Endothelial cell of umbilical vein (primary cell): ENCODE measurements at regions of chr11 and their contacts with region 1.

Region 1: DNA sequence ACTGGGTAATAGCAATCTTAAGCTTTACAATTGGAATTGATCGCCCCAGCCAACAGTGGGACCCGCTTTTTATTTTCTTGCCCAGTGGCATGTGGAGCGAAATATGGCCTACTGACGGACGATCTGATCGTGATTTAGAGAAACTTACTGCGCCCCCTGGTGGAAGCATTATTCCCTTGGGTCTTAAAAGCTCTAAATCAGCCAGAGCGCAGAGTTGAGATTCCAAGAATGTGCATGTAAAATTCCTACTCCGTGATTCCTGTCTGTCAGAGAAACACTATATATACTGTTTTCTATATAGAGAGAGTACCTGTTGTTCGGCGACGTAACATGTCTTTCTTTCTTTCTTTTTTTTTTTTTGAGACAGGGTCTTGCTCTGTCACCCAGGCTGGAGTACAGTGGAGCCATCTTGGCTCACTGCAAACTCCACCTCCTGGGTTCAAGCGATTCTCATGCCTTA is 3.7 kb upstream of the DPF2 start:
- DNase-seq: peak; percentile 88
- H3K4me3 ChIP-seq: no peak overlapping the region
- H3K27ac ChIP-seq: peak overlapping the region; percentile 20
- H3K4me1 ChIP-seq: peaks cover 14% of the 10 kb centered on the region
- H3K27me3 ChIP-seq: no peaks in the 10 kb centered on the region
- CTCF ChIP-seq: peak; percentile 67 to 70
- POLR2A ChIP-seq: no peak

Region 2: GRCh38 chr11:65204646-65205601 is 125.0 kb before region 1 on chr11:
- CTCF ChIA-PET with region 1: interaction called, 14 read pairs
- POLR2A ChIA-PET with region 1: no interaction called
- dilution Hi-C with region 1: no loop called
- intact Hi-C with region 1: loop called (anchors 5 kb)
- DNase-seq: peak; percentile 40
- H3K4me3 ChIP-seq: no peak overlapping the region
- H3K27ac ChIP-seq: no peak overlapping the region
- H3K4me1 ChIP-seq: no peaks in the 10 kb centered on the region
- H3K27me3 ChIP-seq: no peaks in the 10 kb centered on the region
- CTCF ChIP-seq: peak; percentile 83 to 98
- POLR2A ChIP-seq: no peak

Region 3: GRCh38 chr11:65225279-65226102 is 104.5 kb before region 1 on chr11:
- CTCF ChIA-PET with region 1: interaction called, 62 read pairs
- POLR2A ChIA-PET with region 1: no interaction called
- dilution Hi-C with region 1: no loop called
- intact Hi-C with region 1: loop called (anchors 1 kb)
- DNase-seq: peak; percentile 55
- H3K4me3 ChIP-seq: peak overlapping the region; percentile 34 to 65 (median 47)
- H3K27ac ChIP-seq: peak overlapping the region; percentile 12
- H3K4me1 ChIP-seq: peaks cover 20% of the 10 kb centered on the region
- H3K27me3 ChIP-seq: no peaks in the 10 kb centered on the region
- CTCF ChIP-seq: peak; percentile 50 to 58
- POLR2A ChIP-seq: no peak

Region 4: DNA sequence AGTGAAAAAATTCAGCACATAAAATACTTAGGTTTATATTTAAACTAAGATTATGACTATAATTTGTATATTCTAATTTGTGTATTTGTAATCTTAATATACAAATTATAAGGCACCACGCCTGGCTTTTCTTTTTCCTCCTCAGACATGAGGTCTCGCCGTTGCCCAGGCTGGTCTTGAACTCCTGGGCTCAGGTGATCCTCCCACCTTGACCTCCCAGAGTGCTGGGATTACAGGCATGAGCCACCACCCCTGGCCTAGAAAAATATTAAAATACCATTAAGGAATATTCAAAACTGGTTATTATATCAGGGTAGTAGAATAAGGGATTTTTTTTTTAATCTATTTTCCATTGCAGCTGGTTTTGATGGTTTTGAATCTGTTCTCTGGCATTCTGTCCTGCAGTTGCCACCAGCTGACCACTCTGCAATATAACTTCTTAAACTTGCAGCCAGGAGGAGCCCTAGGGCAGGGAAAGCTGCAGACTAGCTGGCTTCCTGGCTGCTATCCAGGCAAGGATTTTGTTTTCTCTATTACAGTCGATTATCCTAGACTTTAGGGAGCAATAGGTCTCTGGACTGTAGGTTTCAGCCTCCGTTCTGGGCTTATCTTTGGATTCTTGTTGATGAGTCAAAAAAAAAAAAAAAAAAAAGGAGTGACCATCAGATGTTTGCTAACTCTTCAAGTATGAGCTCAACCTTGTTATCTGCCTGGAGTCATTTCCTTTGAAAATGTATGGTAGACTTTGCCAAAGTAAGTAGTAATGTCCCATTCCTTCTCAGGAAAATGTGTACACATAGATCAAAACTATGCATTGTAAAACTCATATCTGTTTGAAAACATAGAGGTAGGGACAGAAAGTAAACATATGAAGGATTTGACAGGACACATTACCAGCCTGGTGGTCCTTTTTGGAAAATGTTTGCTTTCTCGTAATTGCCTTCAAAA is 55.0 kb before region 1 on chr11:
- CTCF ChIA-PET with region 1: interaction called, 473 read pairs
- POLR2A ChIA-PET with region 1: interaction called, 11 read pairs
- dilution Hi-C with region 1: no loop called
- intact Hi-C with region 1: loop called (anchors 1 kb)
- DNase-seq: peak; percentile 97
- H3K4me3 ChIP-seq: no peak overlapping the region
- H3K27ac ChIP-seq: peak overlapping the region; percentile 92
- H3K4me1 ChIP-seq: peaks cover 39% of the 10 kb centered on the region
- H3K27me3 ChIP-seq: no peaks in the 10 kb centered on the region
- CTCF ChIP-seq: peak; percentile 60 to 83
- POLR2A ChIP-seq: peak; percentile 48

Region 5: GRCh38 chr11:65308281-65309093 is 21.5 kb before region 1 on chr11:
- CTCF ChIA-PET with region 1: interaction called, 14 read pairs
- POLR2A ChIA-PET with region 1: no interaction called
- dilution Hi-C with region 1: no loop called
- intact Hi-C with region 1: no loop called
- DNase-seq: peak; percentile 58
- H3K4me3 ChIP-seq: no peak overlapping the region
- H3K27ac ChIP-seq: peak overlapping the region; percentile 52
- H3K4me1 ChIP-seq: peaks cover 18% of the 10 kb centered on the region
- H3K27me3 ChIP-seq: no peaks in the 10 kb centered on the region
- CTCF ChIP-seq: no peak
- POLR2A ChIP-seq: no peak

Region 6: GRCh38 chr11:65354265-65355012 is 24.5 kb after region 1 on chr11 and contains the start of gene TIGD3:
- CTCF ChIA-PET with region 1: interaction called, 10 read pairs
- POLR2A ChIA-PET with region 1: no interaction called
- dilution Hi-C with region 1: no loop called
- intact Hi-C with region 1: no loop called
- DNase-seq: peak; percentile 98
- H3K4me3 ChIP-seq: peak within 1 kb of the TSS; percentile 29 to 51 (median 47)
- H3K27ac ChIP-seq: no peak within 1 kb of the TSS
- H3K4me1 ChIP-seq: peaks cover 14% of the 10 kb centered on the region
- H3K27me3 ChIP-seq: peaks cover 5 to 6% of the 10 kb centered on the region in 2 experiments
- CTCF ChIP-seq: no peak
- POLR2A ChIP-seq: peak; percentile 79
- total RNA-seq, gene TIGD3: 0.27 TPM in 1 of 2 replicates, not detected in the other